ENCODE measurements at regions of chr1 and their contacts with region 1.

Region 1: GRCh38 chr1:109397538-109398342 is at the start of gene SORT1:
- DNase-seq: peak; percentile 93
- total RNA-seq, gene SORT1: 184 TPM

Region 2: DNA sequence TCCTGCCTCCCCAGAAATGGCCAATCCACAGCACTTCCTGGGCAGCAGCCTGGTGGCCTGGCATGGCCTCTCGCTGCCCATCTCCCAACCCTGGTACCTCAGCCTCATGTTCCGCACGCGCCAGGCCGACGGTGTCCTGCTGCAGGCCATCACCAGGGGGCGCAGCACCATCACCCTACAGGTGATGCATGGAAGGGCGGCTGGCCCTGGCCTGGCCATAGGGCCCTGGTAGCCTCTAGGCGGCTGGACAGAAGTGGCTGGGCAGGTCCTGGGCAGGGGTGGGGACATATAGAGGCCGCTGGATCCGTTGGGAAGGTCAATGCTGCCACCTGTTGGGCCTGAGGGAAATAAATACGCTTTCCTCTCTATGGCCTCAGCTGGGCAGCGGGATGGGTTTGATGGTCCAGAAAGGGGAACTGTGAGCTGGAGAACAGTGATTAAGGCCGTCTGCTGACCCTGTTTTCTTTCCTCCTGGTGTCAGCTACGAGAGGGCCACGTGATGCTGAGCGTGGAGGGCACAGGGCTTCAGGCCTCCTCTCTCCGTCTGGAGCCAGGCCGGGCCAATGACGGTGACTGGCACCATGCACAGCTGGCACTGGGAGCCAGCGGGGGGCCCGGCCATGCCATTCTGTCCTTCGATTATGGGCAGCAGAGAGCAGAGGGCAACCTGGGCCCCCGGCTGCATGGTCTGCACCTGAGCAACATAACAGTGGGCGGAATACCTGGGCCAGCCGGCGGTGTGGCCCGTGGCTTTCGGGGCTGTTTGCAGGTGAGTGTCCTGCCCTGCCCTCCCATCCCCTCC is 133.9 kb before region 1 on chr1:
- intact Hi-C with region 1: loop called (anchors 5 kb)
- DNase-seq: peak; percentile 92

Region 3: GRCh38 chr1:109277434-109278204 is 120.1 kb before region 1 on chr1:
- intact Hi-C with region 1: loop called (anchors 1 kb)
- DNase-seq: peak; percentile 90

Region 4: DNA sequence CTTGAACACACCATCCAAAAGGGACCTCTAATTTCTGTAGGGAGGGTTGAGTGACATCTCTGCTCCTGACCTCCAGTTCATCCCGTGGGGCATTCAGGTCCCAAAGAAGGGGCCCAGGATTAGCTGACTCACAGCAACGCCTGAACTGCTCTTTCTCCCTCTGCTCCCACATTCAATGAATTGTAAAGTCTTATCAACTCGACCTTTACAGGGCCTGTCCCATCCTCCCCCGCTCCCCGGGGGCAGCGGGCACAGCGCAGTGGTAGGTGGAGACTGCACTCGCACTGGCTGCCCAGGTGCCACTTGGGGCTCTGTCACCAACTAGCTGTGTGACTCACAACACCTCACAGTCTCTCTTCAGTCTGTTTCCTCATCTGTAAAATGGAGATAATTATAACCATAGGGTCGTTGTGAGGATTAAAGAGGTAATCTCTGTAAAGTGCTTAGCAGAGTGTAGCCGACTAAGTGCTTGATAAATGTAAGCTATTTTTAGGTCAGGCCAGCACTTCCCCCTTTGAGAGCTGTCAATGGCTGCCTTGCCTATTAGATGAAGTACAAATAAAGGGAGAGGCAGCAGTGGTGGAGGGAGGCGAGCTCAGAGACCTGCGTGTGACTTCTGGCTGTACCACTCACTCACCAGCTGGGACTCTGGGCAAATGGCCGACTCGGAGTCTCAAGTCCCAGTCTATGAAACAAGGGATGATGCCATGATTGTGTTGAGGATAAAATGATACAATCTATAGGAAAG is 90.3 kb before region 1 on chr1:
- intact Hi-C with region 1: loop called (anchors 2 kb)
- DNase-seq: peak; percentile 79

Region 5: DNA sequence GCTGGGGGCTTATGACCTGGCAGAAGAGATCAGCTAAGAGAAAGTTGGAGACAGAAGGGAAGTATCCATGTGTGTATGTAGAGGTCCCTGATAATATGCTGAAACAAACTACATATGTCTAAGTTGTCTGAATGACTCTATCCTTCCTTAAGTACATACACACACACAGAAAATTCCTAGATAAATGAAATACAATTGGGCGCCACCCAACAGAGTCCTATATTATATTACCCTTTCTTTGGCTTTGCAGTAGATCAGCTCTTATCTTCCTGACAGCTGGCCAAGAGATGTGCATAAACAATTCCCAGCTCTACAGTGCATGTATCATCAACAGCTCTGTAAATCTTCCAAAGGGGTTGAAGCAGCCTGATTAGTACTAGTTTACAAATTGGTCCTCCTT is 40.1 kb before region 1 on chr1:
- intact Hi-C with region 1: loop called (anchors 5 kb)
- DNase-seq: no peak

Region 6: GRCh38 chr1:109370712-109371455 is 26.9 kb before region 1 on chr1:
- intact Hi-C with region 1: loop called (anchors 2 kb)
- DNase-seq: no peak